Transverse colon (tissue), 4 donors: ENCODE measurements at regions of chr2 and their contacts with region 1.

Region 1: GRCh38 chr2:189860161-189860560 is 75.9 kb downstream of the PMS1 start:
- DNase-seq: no peak
- H3K4me3 ChIP-seq: no peak overlapping the region
- H3K27ac ChIP-seq: no peak overlapping the region
- H3K4me1 ChIP-seq: no peaks in the 10 kb centered on the region
- H3K27me3 ChIP-seq: no peaks in the 10 kb centered on the region
- CTCF ChIP-seq: no peak
- EP300 ChIP-seq: no peak
- POLR2A ChIP-seq: no peak

Region 2: GRCh38 chr2:189302274-189302948 is 557.8 kb before region 1 on chr2:
- in situ Hi-C with region 1: no loop called
- intact Hi-C with region 1: no loop called
- DNase-seq: no peak
- H3K4me3 ChIP-seq: no peak overlapping the region
- H3K27ac ChIP-seq: no peak overlapping the region
- H3K4me1 ChIP-seq: no peaks in the 10 kb centered on the region
- H3K27me3 ChIP-seq: no peaks in the 10 kb centered on the region
- CTCF ChIP-seq: no peak
- EP300 ChIP-seq: no peak
- POLR2A ChIP-seq: no peak

Region 3: GRCh38 chr2:189685540-189686229 is 174.5 kb before region 1 on chr2:
- in situ Hi-C with region 1: no loop called
- intact Hi-C with region 1: no loop called
- DNase-seq: peak; percentile 23
- H3K4me3 ChIP-seq: no peak overlapping the region
- H3K27ac ChIP-seq: no peak overlapping the region
- H3K4me1 ChIP-seq: peaks cover 0 to 12% (median 0%) of the 10 kb centered on the region in 4 donors
- H3K27me3 ChIP-seq: no peaks in the 10 kb centered on the region
- CTCF ChIP-seq: no peak
- EP300 ChIP-seq: no peak
- POLR2A ChIP-seq: no peak

Region 4: DNA sequence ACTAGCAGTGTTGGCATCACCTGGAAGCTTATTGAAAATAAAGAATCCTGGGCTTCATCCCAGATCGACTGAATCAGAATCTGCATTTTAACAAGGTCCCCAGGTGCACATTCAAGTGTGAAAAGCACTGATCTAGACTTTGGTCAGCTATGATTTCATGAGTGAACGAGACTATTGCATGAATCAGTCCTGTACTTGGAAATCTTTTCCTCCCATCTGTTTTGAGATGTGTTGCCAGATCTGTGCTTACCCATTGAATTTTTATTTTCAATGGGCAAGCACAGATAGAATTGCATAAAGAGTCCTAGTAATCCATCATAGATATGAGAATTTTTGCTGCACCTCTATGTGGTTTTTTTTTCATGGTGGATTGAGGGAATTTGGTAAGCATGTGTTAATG is 11.9 kb before region 1 on chr2:
- in situ Hi-C with region 1: no loop called
- intact Hi-C with region 1: loop called (anchors 1 kb)
- DNase-seq: no peak
- H3K4me3 ChIP-seq: no peak overlapping the region
- H3K27ac ChIP-seq: no peak overlapping the region
- H3K4me1 ChIP-seq: no peaks in the 10 kb centered on the region
- H3K27me3 ChIP-seq: no peaks in the 10 kb centered on the region
- CTCF ChIP-seq: no peak
- EP300 ChIP-seq: no peak
- POLR2A ChIP-seq: no peak